A673 (cell line): ENCODE measurements at regions of chr16 and their contacts with region 1.

Region 1: GRCh38 chr16:81539009-81539758 is 94.6 kb downstream of the CMIP start:
- DNase-seq: no peak
- H3K4me3 ChIP-seq: no peak overlapping the region
- H3K27ac ChIP-seq: no peak overlapping the region
- H3K4me1 ChIP-seq: no peaks in the 10 kb centered on the region
- H3K27me3 ChIP-seq: no peaks in the 10 kb centered on the region
- CTCF ChIP-seq: no peak

Region 2: GRCh38 chr16:81042821-81043220 is 496.4 kb before region 1 on chr16:
- CTCF ChIA-PET with region 1: no interaction called
- POLR2A ChIA-PET with region 1: interaction called, 21 read pairs
- intact Hi-C with region 1: no loop called
- DNase-seq: no peak
- H3K4me3 ChIP-seq: no peak overlapping the region
- H3K27ac ChIP-seq: no peak overlapping the region
- H3K4me1 ChIP-seq: no peaks in the 10 kb centered on the region
- H3K27me3 ChIP-seq: no peaks in the 10 kb centered on the region
- CTCF ChIP-seq: no peak